IMR-90 (cell line): ENCODE measurements at regions of chr1 and their contacts with region 1.

Region 1: GRCh38 chr1:212857992-212858460 is at the start of gene FLVCR1:
- DNase-seq: peak; percentile 94
- ATAC-seq: peak; percentile 99
- H3K4me3 ChIP-seq: peak within 1 kb of the TSS; percentile 63
- H3K27ac ChIP-seq: peak within 1 kb of the TSS; percentile 56
- H3K4me1 ChIP-seq: peaks cover 9% of the 10 kb centered on the region
- H3K27me3 ChIP-seq: no peaks in the 10 kb centered on the region
- CTCF ChIP-seq: no peak
- POLR2A ChIP-seq: peak; percentile 79
- RAD21 ChIP-seq: no peak
- total RNA-seq, gene FLVCR1: 3.9 and 6.7 TPM in 2 replicates

Region 2: GRCh38 chr1:212797681-212798080 is 60.3 kb before region 1 on chr1:
- CTCF ChIA-PET with region 1: no interaction called
- POLR2A ChIA-PET with region 1: interaction called, 12 read pairs
- dilution Hi-C with region 1: no loop called
- in situ Hi-C with region 1: no loop called
- intact Hi-C with region 1: no loop called
- DNase-seq: peak; percentile 21
- ATAC-seq: no peak
- H3K4me3 ChIP-seq: no peak overlapping the region
- H3K27ac ChIP-seq: no peak overlapping the region
- H3K4me1 ChIP-seq: 0 out of 2 replicates have a peak, but pooled peaks cover 2% of the 10 kb centered on the region
- H3K27me3 ChIP-seq: no peaks in the 10 kb centered on the region
- CTCF ChIP-seq: no peak
- POLR2A ChIP-seq: no peak
- RAD21 ChIP-seq: no peak

Region 3: DNA sequence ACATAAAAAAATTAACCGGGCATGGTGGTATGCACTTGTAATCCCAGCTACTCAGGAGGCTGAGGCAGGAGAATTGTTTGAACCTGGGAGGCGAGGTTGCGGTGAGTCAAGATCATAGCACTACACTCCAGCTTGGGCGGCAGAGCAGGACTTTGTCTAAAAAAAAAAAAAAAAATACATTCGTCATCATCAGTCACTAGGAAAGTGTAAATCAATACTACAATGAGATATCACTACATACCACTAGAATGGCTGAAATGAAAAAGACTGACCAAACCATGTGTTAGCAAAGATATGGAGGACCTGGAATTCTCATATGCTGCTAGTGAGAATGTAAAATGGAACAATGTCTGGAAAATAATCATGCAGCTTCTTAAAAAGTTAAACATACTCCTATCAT is 19.9 kb before region 1 on chr1:
- CTCF ChIA-PET with region 1: interaction called, 3 read pairs
- POLR2A ChIA-PET with region 1: interaction called, 20 read pairs
- dilution Hi-C with region 1: no loop called
- in situ Hi-C with region 1: no loop called
- intact Hi-C with region 1: no loop called
- DNase-seq: no peak
- ATAC-seq: no peak
- H3K4me3 ChIP-seq: no peak overlapping the region
- H3K27ac ChIP-seq: no peak overlapping the region
- H3K4me1 ChIP-seq: no peaks in the 10 kb centered on the region
- H3K27me3 ChIP-seq: no peaks in the 10 kb centered on the region
- CTCF ChIP-seq: no peak
- POLR2A ChIP-seq: no peak
- RAD21 ChIP-seq: no peak

Region 4: GRCh38 chr1:212915245-212916091 is 57.4 kb after region 1 on chr1:
- CTCF ChIA-PET with region 1: no interaction called
- POLR2A ChIA-PET with region 1: no interaction called
- dilution Hi-C with region 1: no loop called
- in situ Hi-C with region 1: no loop called
- intact Hi-C with region 1: no loop called
- DNase-seq: peak; percentile 87
- ATAC-seq: peak; percentile 56
- H3K4me3 ChIP-seq: no peak overlapping the region
- H3K27ac ChIP-seq: no peak overlapping the region; the same call in 1 of the 2 replicates
- H3K4me1 ChIP-seq: peaks cover 9% of the 10 kb centered on the region; the same call in 1 of the 2 replicates
- H3K27me3 ChIP-seq: peaks cover 7% of the 10 kb centered on the region; the same call in 1 of the 2 replicates
- CTCF ChIP-seq: peak; percentile 52
- POLR2A ChIP-seq: no peak
- RAD21 ChIP-seq: peak; percentile 46; the same call in 1 of the 2 replicates

Region 5: DNA sequence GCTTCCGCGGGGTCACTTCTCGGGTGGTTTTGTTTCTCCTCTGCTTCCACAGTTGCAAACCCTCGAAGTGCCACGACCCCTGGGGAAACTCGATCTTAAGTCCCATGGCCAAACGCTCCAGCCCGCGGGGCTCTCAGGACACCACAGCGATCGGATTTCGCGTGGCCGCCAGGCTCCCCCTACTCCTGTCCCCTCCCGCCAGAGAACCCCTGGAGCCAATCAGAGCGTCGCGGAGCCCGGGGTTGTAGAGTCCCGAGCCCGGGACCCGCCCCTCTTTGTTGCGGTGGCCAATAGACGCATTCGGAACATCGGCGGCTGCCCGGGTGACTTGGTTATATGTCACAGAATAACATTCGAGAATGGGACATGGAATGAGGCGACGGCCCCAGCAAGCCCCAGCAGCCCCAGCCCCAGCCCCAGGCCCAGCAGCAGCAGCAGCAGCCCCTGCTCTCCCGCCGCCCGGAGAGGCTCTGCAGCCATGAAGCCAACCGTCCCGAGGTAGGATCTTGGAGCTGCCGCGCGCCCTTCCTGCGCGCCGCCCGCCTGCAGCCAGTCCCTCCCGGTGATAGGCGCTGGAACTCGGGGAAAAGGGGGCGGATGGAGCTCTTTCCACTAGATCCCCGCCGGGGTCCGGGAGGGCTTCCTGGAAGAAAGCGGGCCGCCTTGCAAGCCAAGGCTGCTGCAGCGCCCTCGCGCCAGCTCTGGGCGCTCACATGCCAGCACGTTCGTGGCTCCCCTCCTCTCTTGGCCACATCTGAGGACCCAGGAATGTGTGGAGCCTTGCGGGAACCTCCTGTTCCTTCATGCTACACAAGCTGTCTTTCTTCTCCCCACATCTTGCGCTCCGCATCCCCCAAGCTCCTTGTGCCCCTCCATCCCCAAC is 92.5 kb after region 1 on chr1 and contains the start of gene VASH2:
- CTCF ChIA-PET with region 1: no interaction called
- POLR2A ChIA-PET with region 1: no interaction called
- dilution Hi-C with region 1: no loop called
- in situ Hi-C with region 1: no loop called
- intact Hi-C with region 1: loop called (anchors 2 kb)
- DNase-seq: peak; percentile 74
- ATAC-seq: peak; percentile 99
- H3K4me3 ChIP-seq: peak within 1 kb of the TSS; percentile 66
- H3K27ac ChIP-seq: peak within 1 kb of the TSS; percentile 3
- H3K4me1 ChIP-seq: peaks cover 4% of the 10 kb centered on the region; the same call in 1 of the 2 replicates
- H3K27me3 ChIP-seq: peaks cover 7% of the 10 kb centered on the region; the same call in 1 of the 2 replicates
- CTCF ChIP-seq: no peak
- POLR2A ChIP-seq: no peak
- RAD21 ChIP-seq: no peak
- total RNA-seq, gene VASH2: 0.83 and 0.90 TPM in 2 replicates